H1 (cell line): ENCODE measurements at regions of chr15 and their contacts with region 1.

Region 1: DNA sequence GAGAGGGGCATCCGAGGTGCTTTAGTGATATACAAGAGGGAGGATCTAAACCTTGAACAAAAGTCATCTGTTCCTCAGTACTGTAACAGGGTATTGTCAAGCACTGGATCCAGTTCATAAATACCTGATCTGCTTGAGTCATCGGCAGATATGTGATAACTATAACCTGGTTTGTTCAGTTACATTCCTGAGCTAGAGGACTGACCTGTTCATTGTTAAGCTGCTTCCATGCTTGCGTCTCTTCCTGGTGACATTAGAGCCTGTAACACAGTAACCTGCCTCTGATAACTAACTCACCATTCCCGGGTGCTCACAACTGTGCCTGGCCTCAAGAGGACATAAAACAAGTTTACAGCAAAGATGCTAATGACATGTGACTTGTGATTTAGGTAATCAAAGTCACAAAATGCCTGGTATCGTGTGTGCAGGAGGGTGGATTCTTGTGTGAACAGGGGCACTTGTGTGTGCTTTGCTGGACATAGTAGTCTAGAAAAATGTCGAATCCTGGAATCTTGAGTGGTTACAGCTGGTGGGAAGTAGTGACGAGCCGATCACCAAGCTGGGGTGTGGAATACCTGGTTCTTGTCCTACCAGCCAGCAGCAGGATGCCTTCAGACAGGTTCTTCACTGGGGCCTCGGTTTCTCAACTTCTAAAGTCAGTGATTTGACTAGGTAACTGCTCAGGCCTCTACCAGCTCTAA is 30.9 kb upstream of the POLR2M start:
- DNase-seq: no peak
- H3K4me3 ChIP-seq: no peak overlapping the region
- H3K27ac ChIP-seq: no peak overlapping the region
- H3K4me1 ChIP-seq: no peaks in the 10 kb centered on the region
- H3K27me3 ChIP-seq: no peaks in the 10 kb centered on the region
- CTCF ChIP-seq: no peak
- EP300 ChIP-seq: no peak
- POLR2A ChIP-seq: no peak
- RAD21 ChIP-seq: no peak

Region 2: GRCh38 chr15:57706405-57707209 is 31.0 kb after region 1 on chr15 and contains the start of gene POLR2M:
- CTCF ChIA-PET with region 1: no interaction called
- POLR2A ChIA-PET with region 1: interaction called, 12 read pairs
- DNase-seq: peak; percentile 78 to 82
- H3K4me3 ChIP-seq: peak within 1 kb of the TSS; percentile 93 to 99 (median 96)
- H3K27ac ChIP-seq: peak within 1 kb of the TSS; percentile 85
- H3K4me1 ChIP-seq: peaks cover 0 to 3% (median 3%) of the 10 kb centered on the region in 4 experiments; a peak in 3 of 7 replicates
- H3K27me3 ChIP-seq: peaks cover 0 to 13% (median 5%) of the 10 kb centered on the region in 4 experiments; a peak in 6 of 7 replicates
- CTCF ChIP-seq: no peak
- EP300 ChIP-seq: peak in 1 of 2 experiments; percentile 78; a peak in 1 of 3 replicates
- POLR2A ChIP-seq: peak; percentile 80 to 87
- RAD21 ChIP-seq: no peak
- total RNA-seq, gene POLR2M: 55.1 and 61.7 TPM in 2 replicates

Region 3: DNA sequence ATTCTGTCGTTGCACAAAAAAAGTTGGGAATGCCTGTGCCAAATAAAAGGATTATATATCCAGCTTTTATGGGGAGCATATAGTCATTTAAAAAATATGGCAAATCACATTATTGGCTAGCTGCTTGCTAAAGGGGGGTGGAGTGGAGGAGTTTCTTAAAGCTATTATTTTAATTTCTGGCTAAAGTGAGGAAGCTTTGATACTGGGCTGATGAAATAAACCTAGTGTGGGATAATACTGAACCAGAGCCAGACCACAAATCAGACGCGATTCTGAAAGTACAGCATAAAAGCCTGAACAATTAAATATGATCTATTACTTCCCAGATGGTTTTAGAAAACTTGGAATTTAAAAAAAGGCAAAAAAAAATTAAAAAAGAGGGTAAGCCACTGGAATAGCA is 45.2 kb after region 1 on chr15:
- CTCF ChIA-PET with region 1: no interaction called
- POLR2A ChIA-PET with region 1: no interaction called
- DNase-seq: no peak
- H3K4me3 ChIP-seq: no peak overlapping the region
- H3K27ac ChIP-seq: no peak overlapping the region
- H3K4me1 ChIP-seq: no peaks in the 10 kb centered on the region
- H3K27me3 ChIP-seq: no peaks in the 10 kb centered on the region
- CTCF ChIP-seq: no peak
- EP300 ChIP-seq: no peak
- POLR2A ChIP-seq: no peak
- RAD21 ChIP-seq: no peak

Region 4: GRCh38 chr15:57762302-57762701 is 86.7 kb after region 1 on chr15:
- CTCF ChIA-PET with region 1: no interaction called
- POLR2A ChIA-PET with region 1: no interaction called
- DNase-seq: no peak
- H3K4me3 ChIP-seq: no peak overlapping the region
- H3K27ac ChIP-seq: no peak overlapping the region
- H3K4me1 ChIP-seq: no peaks in the 10 kb centered on the region
- H3K27me3 ChIP-seq: no peaks in the 10 kb centered on the region
- CTCF ChIP-seq: peak in 2 of 3 experiments; percentile 15 to 24; a peak in 2 of 4 replicates
- EP300 ChIP-seq: no peak
- POLR2A ChIP-seq: no peak
- RAD21 ChIP-seq: 0 out of 4 replicates have a peak, but pooled peaks of 1 of the 2 experiments have one; percentile 1